ENCODE measurements at regions of chr19 and their contacts with region 1.

Region 1: GRCh38 chr19:41009700-41010235 is 18.7 kb downstream of the CYP2B6 start:
- DNase-seq: no peak
- ATAC-seq: no peak
- H3K4me3 Mint-ChIP-seq: no peak overlapping the region
- H3K27ac Mint-ChIP-seq: no peak overlapping the region
- H3K4me1 Mint-ChIP-seq: no peaks in the 10 kb centered on the region
- H3K27me3 Mint-ChIP-seq: peaks cover 36% of the 10 kb centered on the region

Region 2: GRCh38 chr19:40928850-40929249 is 80.9 kb before region 1 on chr19:
- CTCF ChIA-PET with region 1: no interaction called
- POLR2A ChIA-PET with region 1: no interaction called
- intact Hi-C with region 1: no loop called
- DNase-seq: no peak
- ATAC-seq: no peak
- H3K4me3 Mint-ChIP-seq: no peak overlapping the region
- H3K27ac Mint-ChIP-seq: no peak overlapping the region
- H3K4me1 Mint-ChIP-seq: no peaks in the 10 kb centered on the region
- H3K27me3 Mint-ChIP-seq: peaks cover 11% of the 10 kb centered on the region

Region 3: DNA sequence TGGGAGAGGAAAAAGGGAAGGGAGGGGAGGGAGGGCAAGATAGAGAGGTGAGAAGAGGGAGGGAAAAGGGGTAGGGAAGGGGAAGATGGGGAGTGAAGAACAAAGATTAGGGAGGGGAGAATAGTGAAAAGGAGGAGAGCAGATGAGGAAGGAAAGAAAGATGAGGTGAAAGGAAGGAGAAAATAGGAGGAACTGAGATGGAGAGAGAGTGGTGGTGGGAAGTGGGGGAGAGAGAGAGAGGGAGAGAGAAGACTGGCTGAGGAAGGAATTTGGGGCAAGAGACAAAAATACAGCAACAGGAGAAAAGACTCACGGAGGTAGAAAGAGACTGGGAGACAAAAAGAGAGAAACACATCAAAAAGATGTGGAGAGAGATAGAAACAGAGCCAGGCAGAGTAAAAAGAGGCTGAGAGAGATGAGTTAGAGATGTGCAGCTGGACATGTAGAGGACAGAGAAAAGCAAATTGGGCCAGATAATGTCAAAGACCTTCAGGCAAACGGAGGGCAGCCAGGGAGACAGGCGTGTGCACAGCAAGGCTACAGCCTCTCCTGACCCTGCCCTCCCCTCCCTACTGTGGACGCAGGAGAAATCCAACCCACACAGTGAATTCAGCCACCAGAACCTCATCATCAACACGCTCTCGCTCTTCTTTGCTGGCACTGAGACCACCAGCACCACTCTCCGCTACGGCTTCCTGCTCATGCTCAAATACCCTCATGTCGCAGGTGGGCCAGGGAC is 68.1 kb before region 1 on chr19:
- CTCF ChIA-PET with region 1: no interaction called
- POLR2A ChIA-PET with region 1: no interaction called
- intact Hi-C with region 1: loop called in 1 of 2 experiments (anchors 2 kb)
- DNase-seq: no peak
- ATAC-seq: no peak
- H3K4me3 Mint-ChIP-seq: no peak overlapping the region
- H3K27ac Mint-ChIP-seq: no peak overlapping the region
- H3K4me1 Mint-ChIP-seq: peaks cover 6% of the 10 kb centered on the region
- H3K27me3 Mint-ChIP-seq: peaks cover 11% of the 10 kb centered on the region

Region 4: DNA sequence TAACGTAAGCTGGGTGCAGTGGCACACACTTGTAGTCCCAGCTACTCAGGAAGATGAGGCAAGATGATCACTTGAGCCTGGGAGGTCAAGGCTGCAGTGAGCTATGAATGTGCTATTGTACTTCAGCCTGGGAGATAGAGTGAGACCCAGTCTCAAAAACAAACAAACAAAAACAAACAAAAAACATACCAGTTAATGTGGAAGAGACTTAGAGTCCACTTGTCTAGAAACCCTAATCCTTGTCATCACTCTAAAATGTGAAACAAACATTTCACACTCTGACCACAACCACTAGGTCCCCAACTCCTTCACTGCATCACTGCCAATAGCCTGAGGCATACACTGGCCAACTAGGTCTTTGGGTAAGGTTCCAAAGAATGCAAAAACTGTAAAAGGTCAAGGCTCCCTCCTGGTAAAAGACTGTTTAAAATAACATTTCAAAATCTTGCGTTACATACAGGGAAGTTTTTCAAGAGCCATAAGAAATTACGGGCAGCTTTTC is 47.3 kb before region 1 on chr19:
- CTCF ChIA-PET with region 1: no interaction called
- POLR2A ChIA-PET with region 1: no interaction called
- intact Hi-C with region 1: no loop called
- DNase-seq: no peak
- ATAC-seq: no peak
- H3K4me3 Mint-ChIP-seq: no peak overlapping the region
- H3K27ac Mint-ChIP-seq: no peak overlapping the region
- H3K4me1 Mint-ChIP-seq: no peaks in the 10 kb centered on the region
- H3K27me3 Mint-ChIP-seq: peaks cover 20% of the 10 kb centered on the region

Measured in activated CD4-positive, alpha-beta T cell treated with anti-CD3 and anti-CD28 coated beads for 36 hours (primary cell).